Psoas muscle (tissue), 8 donors: ENCODE measurements at regions of chr15 and their contacts with region 1.

Region 1: GRCh38 chr15:75903331-75904239 is at the start of gene FBXO22:
- DNase-seq: peak; percentile 92 to 95
- ATAC-seq: peak; percentile 98 to 100 (median 98)
- H3K4me3 ChIP-seq: peak within 1 kb of the TSS; percentile 99
- H3K27ac ChIP-seq: peak within 1 kb of the TSS; percentile 78
- H3K4me1 ChIP-seq: peaks cover 13% of the 10 kb centered on the region
- H3K27me3 ChIP-seq: no peaks in the 10 kb centered on the region
- CTCF ChIP-seq: no peak
- total RNA-seq, gene FBXO22: 13.9 to 16.8 (median 14.9) TPM

Region 2: DNA sequence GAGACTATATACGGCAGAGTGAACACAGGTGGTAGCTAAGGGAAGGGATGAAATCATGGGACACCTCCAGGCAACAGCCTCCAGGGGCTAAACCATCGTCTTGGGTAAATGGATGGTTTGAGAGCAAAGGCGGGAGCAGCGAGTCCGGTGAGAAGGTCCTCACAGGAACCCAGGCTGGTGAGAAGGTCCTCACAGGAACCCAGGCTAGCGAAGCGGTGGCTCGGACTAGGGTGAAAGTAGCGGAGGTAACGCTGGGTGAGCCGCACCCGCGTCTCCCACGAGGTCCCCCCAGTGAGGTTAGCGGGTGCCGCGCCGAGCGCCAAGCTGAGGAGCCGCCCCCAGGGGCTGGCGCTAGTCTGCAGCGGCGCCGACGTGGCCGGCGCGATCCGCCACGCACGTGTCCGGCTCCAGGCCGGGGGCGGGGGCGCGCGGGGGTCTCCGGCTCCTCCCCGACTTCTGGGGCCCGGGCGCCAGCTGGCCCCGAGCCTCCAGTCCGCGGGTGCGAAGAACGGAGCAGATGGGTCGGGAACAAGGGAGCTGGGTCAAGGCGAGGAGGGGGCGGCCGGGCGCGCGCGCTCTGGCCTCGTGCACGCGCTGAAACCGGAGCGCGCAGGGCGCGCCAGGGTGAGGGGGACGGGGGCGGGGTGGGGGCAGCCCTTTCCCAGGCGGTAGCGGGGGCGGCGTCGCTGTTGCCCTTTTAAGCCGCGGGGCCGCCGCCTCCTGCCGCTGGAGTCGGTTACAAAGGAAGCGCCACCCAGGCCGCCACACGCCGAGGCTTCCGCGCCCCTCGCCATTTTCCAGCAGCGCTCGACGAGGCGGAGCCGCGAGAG is 60.6 kb before region 1 on chr15 and contains the start of gene UBE2Q2:
- intact Hi-C with region 1: loop called in 1 of 2 experiments (anchors 5 kb)
- DNase-seq: peak; percentile 82 to 87
- ATAC-seq: peak; percentile 62 to 75 (median 70)
- H3K4me3 ChIP-seq: peak within 1 kb of the TSS; percentile 90
- H3K27ac ChIP-seq: peak within 1 kb of the TSS; percentile 82
- H3K4me1 ChIP-seq: peaks cover 18% of the 10 kb centered on the region
- H3K27me3 ChIP-seq: no peaks in the 10 kb centered on the region
- CTCF ChIP-seq: no peak
- total RNA-seq, gene UBE2Q2: 14.0 to 26.4 (median 19.1) TPM